Aorta (tissue), 5 donors: ENCODE measurements at regions of chr16 and their contacts with region 1.

Region 1: GRCh38 chr16:87581833-87582203 is 20.5 kb upstream of the JPH3 start:
- DNase-seq: peak; percentile 89
- ATAC-seq: peak; percentile 90
- H3K4me3 ChIP-seq: no peak overlapping the region
- H3K27ac ChIP-seq: peak overlapping the region in 1 of 2 donors; percentile 82
- H3K4me1 ChIP-seq: no peaks in the 10 kb centered on the region
- H3K27me3 ChIP-seq: no peaks in the 10 kb centered on the region

Region 2: DNA sequence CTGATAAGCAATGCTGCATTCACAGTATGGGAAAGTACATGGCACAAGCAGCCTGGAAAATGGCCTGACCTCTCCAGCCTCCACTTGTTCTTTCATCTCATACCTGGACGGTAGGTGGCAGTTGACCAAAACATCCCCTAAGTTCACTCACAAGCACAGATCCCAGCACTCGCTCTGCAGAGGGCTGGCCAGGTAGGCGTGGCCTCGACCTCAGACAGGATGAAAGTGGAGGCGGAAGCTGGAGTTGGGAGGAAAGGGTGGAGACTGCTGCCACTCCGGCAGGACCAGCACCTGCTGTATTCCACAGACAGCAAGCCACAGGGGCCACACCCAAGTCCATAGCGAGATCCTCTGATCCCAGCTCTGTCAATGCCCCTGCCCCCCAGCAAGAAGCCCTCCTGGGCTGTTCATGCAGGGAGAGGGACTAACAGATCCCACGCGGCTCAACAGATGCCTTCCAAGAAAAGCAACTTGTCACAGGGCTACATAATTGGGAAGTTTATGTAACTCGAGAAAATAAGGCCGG is 120.3 kb before region 1 on chr16:
- intact Hi-C with region 1: loop called in 1 of 2 experiments (anchors 5 kb)
- DNase-seq: peak; percentile 76 to 86
- ATAC-seq: peak; percentile 27
- H3K4me3 ChIP-seq: no peak overlapping the region
- H3K27ac ChIP-seq: peak overlapping the region in 1 of 2 donors; percentile 4
- H3K4me1 ChIP-seq: peaks cover 0 to 3% of the 10 kb centered on the region in 2 donors
- H3K27me3 ChIP-seq: no peaks in the 10 kb centered on the region

Region 3: GRCh38 chr16:87550496-87550961 is 31.3 kb before region 1 on chr16:
- intact Hi-C with region 1: no loop called
- DNase-seq: peak in 1 of 2 donors; percentile 88
- ATAC-seq: peak; percentile 63
- H3K4me3 ChIP-seq: no peak overlapping the region
- H3K27ac ChIP-seq: no peak overlapping the region
- H3K4me1 ChIP-seq: no peaks in the 10 kb centered on the region
- H3K27me3 ChIP-seq: no peaks in the 10 kb centered on the region